ENCODE measurements at regions of chr9 and their contacts with region 1.

Region 1: GRCh38 chr9:72871685-72872084 is 81.2 kb downstream of the ALDH1A1 start:
- DNase-seq: no peak
- ATAC-seq: peak; percentile 40

Region 2: GRCh38 chr9:72661401-72662135 is 210.1 kb before region 1 on chr9:
- intact Hi-C with region 1: no loop called
- DNase-seq: no peak
- ATAC-seq: no peak

Region 3: GRCh38 chr9:72952914-72953313 is 81.2 kb after region 1 on chr9 and contains the start of gene ALDH1A1:
- intact Hi-C with region 1: loop called in 1 of 2 experiments (anchors 5 kb)
- DNase-seq: peak in 1 of 2 donors; percentile 46
- ATAC-seq: peak; percentile 72
- total RNA-seq, gene ALDH1A1: 91.0 to 105 TPM

Region 4: DNA sequence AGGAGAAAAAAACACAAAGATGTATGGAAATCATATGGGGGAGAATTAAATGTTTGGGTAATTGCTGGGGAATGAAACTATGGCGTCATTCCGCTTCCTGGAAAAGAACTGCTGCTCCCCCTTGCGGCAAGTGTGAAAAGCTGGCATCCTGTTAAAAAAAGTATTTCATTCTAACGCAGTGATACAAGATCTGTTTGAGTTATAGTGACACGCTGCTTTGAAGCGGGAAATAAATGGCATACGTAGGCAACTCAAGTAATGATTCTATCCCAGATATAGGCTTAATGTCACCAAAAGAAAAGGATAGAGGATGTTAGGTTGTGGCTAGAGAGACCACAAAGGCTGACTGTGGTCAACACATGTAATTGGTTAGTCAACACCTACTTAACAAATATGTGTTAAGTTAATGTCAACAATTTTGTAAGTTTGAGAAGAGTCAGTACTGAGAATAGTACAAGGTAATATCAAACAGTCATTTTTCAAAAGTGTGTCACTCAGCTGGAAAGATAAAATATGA is 151.4 kb after region 1 on chr9:
- intact Hi-C with region 1: loop called in 1 of 2 experiments (anchors 5 kb)
- DNase-seq: peak; percentile 36 to 44
- ATAC-seq: peak; percentile 72

Region 5: DNA sequence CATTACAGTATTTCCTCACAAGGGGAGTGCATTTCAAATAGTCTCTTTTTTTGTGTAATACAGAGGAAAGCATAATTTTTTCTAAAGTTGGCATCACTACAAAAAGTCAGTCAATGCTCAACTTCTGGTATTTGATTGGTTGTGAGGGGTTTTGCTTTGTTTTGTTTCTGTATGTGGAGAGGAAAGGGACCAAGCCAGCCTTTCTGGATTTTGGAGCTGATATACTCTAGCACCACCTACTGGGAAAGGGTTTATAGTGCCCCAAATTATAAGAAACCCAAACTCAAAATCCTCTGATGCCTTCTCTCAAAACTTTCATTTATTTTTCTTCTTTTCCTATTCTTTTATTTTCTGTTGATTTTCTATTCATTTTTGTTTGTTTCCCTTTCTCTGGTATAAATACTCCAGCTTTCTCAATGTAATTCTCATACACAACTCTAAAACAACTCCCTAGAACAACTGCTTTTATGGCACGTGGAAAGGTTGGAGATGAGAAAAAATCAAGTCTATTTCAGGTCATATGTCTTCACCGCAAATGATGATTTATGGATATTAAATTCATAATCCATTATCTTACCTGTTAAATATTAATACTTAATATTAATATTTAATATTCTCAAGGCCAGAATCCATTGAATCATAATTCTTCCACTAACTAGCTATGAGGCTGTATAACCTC is 210.4 kb after region 1 on chr9:
- intact Hi-C with region 1: loop called in 1 of 2 experiments (anchors 5 kb)
- DNase-seq: no peak
- ATAC-seq: peak; percentile 40

Region 6: GRCh38 chr9:73093740-73094379 is 222.2 kb after region 1 on chr9:
- intact Hi-C with region 1: loop called in 1 of 2 experiments (anchors 10 kb)
- DNase-seq: no peak
- ATAC-seq: no peak